ENCODE measurements at regions of chr7 and their contacts with region 1.

Region 1: DNA sequence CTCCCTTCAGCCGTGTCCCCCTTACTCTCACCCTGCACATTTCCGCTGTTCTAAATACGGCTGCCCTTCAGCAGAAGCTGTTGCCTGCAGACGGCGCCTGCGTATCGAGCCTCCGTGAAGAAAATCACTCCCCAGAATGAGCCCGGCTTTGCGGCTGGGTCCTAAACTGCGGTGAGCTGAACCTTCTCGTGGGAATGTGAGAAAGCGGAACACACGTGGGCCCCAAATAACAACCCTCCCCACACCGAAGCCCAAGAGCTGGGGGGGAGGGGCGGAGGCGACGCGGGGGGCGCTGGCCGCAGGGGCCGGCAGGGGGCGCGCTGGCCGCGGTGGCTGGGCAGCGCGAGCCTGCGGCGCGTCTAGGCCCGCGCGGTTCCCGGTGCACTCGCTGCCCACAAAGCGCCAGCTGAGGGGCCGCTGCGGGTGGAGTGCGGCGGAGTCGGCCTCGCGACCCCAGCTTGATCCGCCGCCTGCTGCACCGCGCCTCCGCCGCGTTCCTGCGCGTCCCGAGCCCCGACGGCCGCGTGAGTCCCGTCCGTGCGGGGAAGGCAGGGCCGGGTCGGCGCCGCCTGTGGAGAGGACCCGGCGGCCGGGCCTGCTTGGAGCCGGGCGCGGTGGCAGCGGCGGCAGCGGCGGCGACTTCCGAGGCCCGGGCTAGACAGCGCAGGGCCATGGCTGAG is at the start of gene ZNF398:
- DNase-seq: no peak
- H3K4me3 ChIP-seq: peak within 1 kb of the TSS; percentile 90
- H3K27me3 ChIP-seq: no peaks in the 10 kb centered on the region
- CTCF ChIP-seq: peak; percentile 49
- polyA plus RNA-seq, gene ZNF398: 5.9 and 8.0 TPM in 2 replicates

Region 2: GRCh38 chr7:149125863-149126661 is 21.1 kb before region 1 on chr7 and contains the start of gene ZNF425:
- CTCF ChIA-PET with region 1: interaction called, 27 read pairs
- POLR2A ChIA-PET with region 1: no interaction called
- DNase-seq: peak; percentile 48
- H3K4me3 ChIP-seq: peak within 1 kb of the TSS; percentile 91
- H3K27me3 ChIP-seq: no peaks in the 10 kb centered on the region
- CTCF ChIP-seq: peak; percentile 95
- polyA plus RNA-seq, gene ZNF425: 1.8 and 2.0 TPM in 2 replicates

Region 3: GRCh38 chr7:149133028-149133705 is 14.0 kb before region 1 on chr7:
- CTCF ChIA-PET with region 1: interaction called, 27 read pairs
- POLR2A ChIA-PET with region 1: no interaction called
- DNase-seq: no peak
- H3K4me3 ChIP-seq: no peak overlapping the region
- H3K27me3 ChIP-seq: no peaks in the 10 kb centered on the region
- CTCF ChIP-seq: no peak